Sigmoid colon (tissue), 7 donors: ENCODE measurements at regions of chr4 and their contacts with region 1.

Region 1: DNA sequence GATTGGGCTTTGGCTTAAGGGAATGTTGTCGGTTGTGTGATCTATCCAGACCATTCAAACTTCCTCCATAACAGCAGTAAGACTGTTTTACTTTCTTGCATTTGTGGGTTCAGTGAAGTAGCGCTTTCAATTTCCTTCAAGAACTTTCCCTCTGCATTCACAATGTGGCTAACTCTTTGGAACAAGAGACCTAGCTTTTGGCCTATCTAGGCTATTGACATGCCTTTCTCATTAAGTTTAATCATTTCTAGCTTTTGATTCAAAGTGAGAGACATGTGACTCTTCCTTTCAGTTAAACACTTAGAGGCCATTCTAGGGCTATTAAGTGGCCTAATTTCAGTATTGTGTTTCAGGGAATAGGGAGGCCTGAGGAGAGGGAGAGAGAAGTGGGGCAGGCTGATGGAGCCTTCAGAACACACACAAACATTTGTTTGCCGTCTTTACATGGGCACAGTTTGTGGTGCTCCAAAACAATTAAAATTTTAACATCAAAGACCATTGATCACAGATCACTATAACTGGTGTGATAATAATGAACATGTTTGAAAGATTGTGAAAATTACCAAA is 34.1 kb downstream of the ADH5 start:
- DNase-seq: no peak
- H3K4me3 ChIP-seq: no peak overlapping the region
- H3K27ac ChIP-seq: no peak overlapping the region
- H3K4me1 ChIP-seq: peaks cover 0 to 30% (median 18%) of the 10 kb centered on the region in 4 donors
- H3K27me3 ChIP-seq: no peaks in the 10 kb centered on the region
- CTCF ChIP-seq: no peak
- EP300 ChIP-seq: no peak
- POLR2A ChIP-seq: no peak

Region 2: DNA sequence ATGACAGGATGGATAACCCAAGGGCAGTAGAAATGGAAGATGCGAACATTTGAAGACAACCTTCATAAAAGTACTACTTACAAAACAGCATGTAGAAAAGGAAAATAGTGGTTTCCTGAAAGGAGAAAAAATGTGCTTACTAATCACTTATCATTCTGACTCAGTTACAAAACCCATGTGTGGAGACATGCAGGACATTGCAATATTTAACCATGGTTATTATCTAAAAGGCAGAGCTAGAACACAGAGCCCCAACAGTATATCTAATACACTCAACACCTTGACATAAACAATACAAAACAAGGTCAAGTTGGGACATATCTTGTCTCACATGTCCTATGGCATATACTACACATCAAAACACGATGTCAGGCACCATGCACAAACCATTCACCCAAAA is 181.5 kb before region 1 on chr4:
- intact Hi-C with region 1: no loop called
- DNase-seq: no peak
- H3K4me3 ChIP-seq: no peak overlapping the region
- H3K27ac ChIP-seq: no peak overlapping the region
- H3K4me1 ChIP-seq: no peaks in the 10 kb centered on the region
- H3K27me3 ChIP-seq: no peaks in the 10 kb centered on the region
- CTCF ChIP-seq: no peak
- EP300 ChIP-seq: no peak
- POLR2A ChIP-seq: no peak

Region 3: DNA sequence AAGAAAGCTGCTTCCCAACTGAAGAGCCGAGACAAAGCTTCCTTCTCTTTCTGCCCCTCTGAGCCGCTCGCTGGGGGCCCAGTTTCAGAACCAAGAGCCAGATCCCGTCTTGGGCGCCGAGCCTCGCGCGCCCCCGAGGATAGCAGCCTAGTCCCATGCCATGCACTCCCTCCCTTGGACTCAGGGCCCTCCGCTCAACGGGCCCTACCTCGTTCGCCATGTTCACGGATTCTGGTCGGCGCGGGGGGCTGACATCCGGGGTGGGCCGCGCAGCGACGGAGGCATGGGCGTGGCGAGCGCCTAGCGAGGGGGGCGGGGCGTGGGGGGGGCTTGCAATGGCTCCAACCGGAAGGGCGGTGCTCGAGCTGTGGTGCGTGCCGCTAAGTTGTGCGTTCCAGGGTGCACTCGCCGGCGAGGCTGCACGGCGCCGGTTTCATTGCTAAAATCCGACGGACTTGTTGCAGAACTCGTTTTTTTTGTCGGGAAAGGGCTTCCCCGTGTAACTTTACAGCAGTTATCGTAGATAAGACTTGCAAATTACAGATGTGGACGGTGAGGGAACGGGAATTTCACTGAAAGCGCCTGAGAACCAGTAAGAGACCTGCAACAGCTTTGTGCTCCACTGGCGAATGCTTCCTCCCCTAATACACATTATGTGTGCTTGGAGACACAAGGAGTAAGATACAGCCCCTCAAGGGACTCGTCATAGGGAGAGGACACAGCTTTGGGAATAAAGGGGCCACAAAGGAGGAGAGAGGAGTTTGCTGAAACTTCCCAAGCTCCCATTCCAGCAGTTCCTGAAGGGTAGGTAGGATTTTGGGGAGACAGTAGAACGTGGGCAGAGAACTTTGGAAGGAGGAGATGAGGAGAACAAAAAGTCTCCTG is 34.2 kb after region 1 on chr4 and contains the start of gene ADH5:
- intact Hi-C with region 1: loop called (anchors 5 kb)
- DNase-seq: peak; percentile 96
- H3K4me3 ChIP-seq: peak within 1 kb of the TSS; percentile 73 to 89 (median 84)
- H3K27ac ChIP-seq: peak within 1 kb of the TSS; percentile 91 to 98 (median 97)
- H3K4me1 ChIP-seq: peaks cover 0 to 50% (median 38%) of the 10 kb centered on the region in 4 donors
- H3K27me3 ChIP-seq: no peaks in the 10 kb centered on the region
- CTCF ChIP-seq: no peak
- EP300 ChIP-seq: no peak
- POLR2A ChIP-seq: peak; percentile 94 to 97
- total RNA-seq, gene ADH5: 235 to 349 (median 263) TPM

Region 4: DNA sequence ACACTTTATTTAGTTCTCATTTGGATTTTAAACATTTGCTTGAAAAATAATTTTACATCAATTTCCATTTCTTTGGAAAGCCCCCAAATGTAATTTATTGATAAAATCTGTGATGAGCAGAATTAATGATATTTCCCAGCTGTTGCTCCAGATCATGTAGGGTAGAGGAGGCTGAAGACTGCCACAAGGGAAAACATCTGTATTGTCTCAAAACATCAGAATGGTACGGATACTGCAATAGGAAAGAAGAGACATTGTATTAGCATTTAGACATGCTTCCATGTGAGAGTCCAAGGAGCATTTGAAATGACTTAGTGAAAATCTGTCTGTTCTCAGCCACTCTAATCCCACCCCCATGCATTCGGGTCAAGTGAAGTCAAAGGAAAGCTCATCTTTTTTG is 221.9 kb after region 1 on chr4:
- intact Hi-C with region 1: no loop called
- DNase-seq: no peak
- H3K4me3 ChIP-seq: no peak overlapping the region
- H3K27ac ChIP-seq: no peak overlapping the region
- H3K4me1 ChIP-seq: no peaks in the 10 kb centered on the region
- H3K27me3 ChIP-seq: no peaks in the 10 kb centered on the region
- CTCF ChIP-seq: no peak
- EP300 ChIP-seq: no peak
- POLR2A ChIP-seq: no peak